Right ventricle myocardium superior (tissue), 1 donor: ENCODE measurements at regions of chr9 and their contacts with region 1.

Region 1: DNA sequence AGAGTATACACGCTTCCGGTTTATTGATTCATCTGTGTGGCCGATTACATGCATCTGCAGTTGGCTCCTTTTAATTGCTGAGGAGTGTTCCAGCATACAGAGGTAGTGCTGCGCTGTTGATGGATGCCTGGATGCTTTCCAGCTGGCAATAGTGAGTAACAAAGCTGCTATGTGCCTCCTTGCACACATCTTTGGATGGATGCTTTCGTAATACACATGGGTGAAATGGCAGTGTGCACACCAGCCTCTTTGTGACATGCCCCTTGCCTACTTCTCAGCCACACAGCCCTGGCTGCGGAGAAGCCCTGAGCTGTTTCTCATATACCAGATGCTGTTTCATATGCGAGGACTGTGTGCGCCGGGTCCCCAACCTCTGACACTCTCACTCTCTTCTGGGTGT is 151.0 kb downstream of the GADD45G start:
- DNase-seq: no peak
- ATAC-seq: peak; percentile 77

Region 2: DNA sequence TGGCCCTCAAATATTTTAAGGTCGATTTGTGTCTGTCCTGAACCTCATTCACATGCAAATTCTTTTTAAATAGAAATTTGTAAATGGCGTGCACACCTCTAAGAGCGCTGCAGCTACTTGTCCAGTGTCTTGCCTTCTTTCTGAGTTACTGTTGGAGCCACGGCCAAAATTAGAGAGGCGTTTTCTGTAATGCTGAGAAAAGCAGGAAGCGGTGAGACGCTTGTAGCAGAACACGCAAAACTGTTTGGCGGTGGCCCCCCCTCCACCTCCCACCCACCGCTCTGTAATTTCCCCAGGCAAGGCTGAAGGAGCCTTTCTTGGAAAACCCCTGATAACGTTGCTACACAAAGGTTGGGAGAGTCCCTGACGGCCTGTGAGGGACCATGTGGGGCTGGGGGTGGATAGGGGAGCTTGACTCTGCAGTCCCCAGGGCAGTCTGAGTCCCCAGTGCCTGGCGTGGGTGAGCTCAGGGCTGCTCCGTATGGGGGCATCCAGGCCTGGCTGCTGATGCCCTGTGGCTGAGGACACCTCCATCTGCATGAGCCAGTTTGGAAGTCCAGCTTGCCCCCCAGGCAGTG is 54.5 kb before region 1 on chr9:
- intact Hi-C with region 1: no loop called
- DNase-seq: no peak
- ATAC-seq: no peak

Region 3: DNA sequence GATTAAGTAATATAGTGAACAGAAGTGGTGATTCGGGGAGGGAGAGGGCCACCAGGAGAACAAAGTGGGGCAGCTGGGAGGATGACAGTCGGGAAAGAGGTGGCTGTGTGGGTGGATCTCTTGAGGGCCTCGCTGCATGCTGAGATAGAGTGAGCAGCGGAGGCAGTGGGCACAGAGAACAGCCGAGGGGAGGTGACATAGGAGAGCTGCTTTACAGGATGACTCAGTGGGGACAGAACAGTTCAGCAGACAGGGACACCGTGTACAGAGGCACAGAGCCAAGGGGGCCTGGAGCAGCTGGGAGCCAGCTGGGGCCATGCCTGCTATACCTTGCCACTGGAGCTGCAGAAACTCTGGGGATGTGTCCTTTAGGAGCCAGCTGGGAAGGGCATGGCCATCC is 122.9 kb after region 1 on chr9:
- intact Hi-C with region 1: loop called (anchors 5 kb)
- DNase-seq: peak; percentile 88
- ATAC-seq: peak; percentile 80

Region 4: DNA sequence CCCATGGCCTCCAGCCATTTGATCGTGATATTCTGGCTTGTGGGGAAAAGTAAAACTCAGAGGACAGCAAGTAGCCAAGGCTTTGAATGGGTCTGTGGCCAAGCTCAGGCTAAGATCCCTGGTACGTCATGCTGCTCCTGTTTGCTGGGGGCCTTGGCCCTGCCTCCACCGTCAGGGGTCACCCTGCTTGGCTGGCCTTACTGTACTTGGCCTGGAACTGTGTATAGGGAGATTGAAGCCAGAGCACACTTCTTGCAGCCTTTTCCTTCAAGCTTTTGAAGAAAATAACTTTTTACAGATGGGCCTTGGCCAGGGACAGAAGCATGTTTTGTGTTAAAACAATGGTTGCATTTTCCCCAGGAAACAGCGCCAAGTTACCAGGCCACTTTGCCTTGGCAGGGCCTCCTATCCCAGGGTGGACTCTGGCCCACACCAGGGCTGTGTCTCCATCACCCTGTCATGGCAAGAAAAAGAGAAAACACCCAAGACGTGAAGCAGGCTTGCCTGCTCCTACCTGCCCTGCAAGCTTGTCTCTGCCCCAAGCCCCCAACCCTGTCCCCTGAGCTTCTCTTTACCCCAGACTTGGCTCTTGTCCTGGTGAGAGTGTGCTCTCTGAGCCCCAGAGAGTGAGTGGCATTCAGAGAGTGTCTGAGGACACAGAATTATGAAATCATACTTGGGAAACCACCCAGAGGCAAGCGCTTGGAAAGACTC is 135.9 kb after region 1 on chr9:
- intact Hi-C with region 1: no loop called
- DNase-seq: peak; percentile 84
- ATAC-seq: peak; percentile 89